Naive thymus-derived CD4-positive, alpha-beta T cell (primary cell): ENCODE measurements at regions of chr9 and their contacts with region 1.

Region 1: GRCh38 chr9:27033823-27034403 is 28.4 kb upstream of the LRRC19 start:
- DNase-seq: peak in 6 of 9 donors; percentile 11 to 45 (median 14)
- ATAC-seq: peak; percentile 57
- H3K4me3 ChIP-seq: no peak overlapping the region
- H3K4me3 Mint-ChIP-seq: no peak overlapping the region
- H3K27ac ChIP-seq: no peak overlapping the region
- H3K27ac Mint-ChIP-seq: no peak overlapping the region
- H3K4me1 ChIP-seq: no peaks in the 10 kb centered on the region
- H3K4me1 Mint-ChIP-seq: no peaks in the 10 kb centered on the region
- H3K27me3 ChIP-seq: no peaks in the 10 kb centered on the region
- H3K27me3 Mint-ChIP-seq: no peaks in the 10 kb centered on the region

Region 2: GRCh38 chr9:27276193-27277030 is 242.5 kb after region 1 on chr9:
- CTCF ChIA-PET with region 1: no interaction called
- POLR2A ChIA-PET with region 1: no interaction called
- intact Hi-C with region 1: loop called (anchors 1 kb)
- DNase-seq: peak in 6 of 9 donors; percentile 27 to 51 (median 45)
- ATAC-seq: peak; percentile 48
- H3K4me3 ChIP-seq: no peak overlapping the region
- H3K4me3 Mint-ChIP-seq: peak overlapping the region in 2 of 10 donors; percentile 6 to 8
- H3K27ac ChIP-seq: no peak overlapping the region
- H3K27ac Mint-ChIP-seq: no peak overlapping the region
- H3K4me1 ChIP-seq: no peaks in the 10 kb centered on the region
- H3K4me1 Mint-ChIP-seq: peaks cover 0 to 5% (median 4%) of the 10 kb centered on the region in 7 donors
- H3K27me3 ChIP-seq: no peaks in the 10 kb centered on the region
- H3K27me3 Mint-ChIP-seq: peaks cover 0 to 10% (median 5%) of the 10 kb centered on the region in 5 donors

Region 3: DNA sequence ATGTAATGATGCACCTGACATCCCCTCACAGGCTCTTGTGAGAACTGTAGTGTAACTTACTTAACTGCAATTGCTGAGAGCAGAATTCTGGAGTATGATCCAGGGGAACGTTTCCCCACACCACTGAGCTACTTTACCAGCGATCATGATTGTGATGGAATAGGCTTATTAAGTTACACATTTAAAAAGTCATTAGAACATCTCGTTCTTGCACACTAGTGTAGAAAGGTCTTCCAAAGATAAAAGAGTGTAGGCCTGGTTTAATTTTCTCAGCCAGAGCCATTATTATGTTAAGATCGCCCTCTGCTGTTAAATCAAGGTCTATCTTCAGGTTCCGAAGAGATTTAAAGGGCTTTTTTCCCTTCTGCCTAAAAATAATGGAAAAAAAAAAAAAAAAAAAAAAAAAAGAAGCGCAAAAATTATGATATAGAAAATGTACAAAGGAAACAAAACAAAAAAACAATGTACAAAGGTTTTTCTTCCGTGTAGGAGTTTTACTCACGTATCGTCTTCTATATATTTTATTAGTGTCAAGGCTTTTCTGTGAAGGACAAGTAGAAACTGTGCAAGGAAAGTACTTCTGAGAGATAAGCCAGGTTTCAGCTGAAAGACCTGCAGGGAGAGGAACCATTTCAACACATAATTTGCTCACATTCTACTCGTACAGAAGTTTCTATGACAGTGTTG is 514.3 kb after region 1 on chr9:
- CTCF ChIA-PET with region 1: no interaction called
- POLR2A ChIA-PET with region 1: no interaction called
- intact Hi-C with region 1: loop called in 1 of 2 experiments (anchors 2 kb)
- DNase-seq: peak in 1 of 9 donors; percentile 21
- ATAC-seq: no peak
- H3K4me3 ChIP-seq: no peak overlapping the region
- H3K4me3 Mint-ChIP-seq: no peak overlapping the region
- H3K27ac ChIP-seq: no peak overlapping the region
- H3K27ac Mint-ChIP-seq: no peak overlapping the region
- H3K4me1 ChIP-seq: no peaks in the 10 kb centered on the region
- H3K4me1 Mint-ChIP-seq: peaks cover 0 to 2% (median 0%) of the 10 kb centered on the region in 7 donors
- H3K27me3 ChIP-seq: no peaks in the 10 kb centered on the region
- H3K27me3 Mint-ChIP-seq: no peaks in the 10 kb centered on the region